ENCODE measurements at regions of chr4 and their contacts with region 1.

Region 1: DNA sequence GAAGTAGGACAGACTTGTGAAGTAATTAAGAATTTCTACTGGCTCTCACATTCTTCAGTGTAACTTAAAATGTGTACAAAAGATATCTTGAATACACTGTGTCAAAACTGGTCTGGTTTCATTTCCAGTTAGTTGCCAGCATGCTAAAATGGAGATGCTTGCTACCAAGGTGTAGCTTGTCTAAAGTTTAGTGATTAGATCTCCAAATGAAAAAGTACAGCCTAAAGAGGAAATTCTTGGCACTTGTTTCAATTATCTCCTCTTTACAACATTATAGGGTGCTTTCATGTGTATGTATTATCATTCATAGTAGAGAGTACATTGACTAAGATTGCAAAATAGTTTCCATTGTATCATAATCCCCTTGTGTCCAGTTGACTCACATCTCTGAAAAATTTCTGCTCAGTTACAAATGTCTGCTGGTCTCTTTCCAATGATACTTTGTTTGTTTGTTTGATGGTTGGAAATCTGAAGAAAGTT is 97.3 kb upstream of the SPRY1 start:
- DNase-seq: peak; percentile 13
- H3K4me3 ChIP-seq: no peak overlapping the region
- H3K27ac ChIP-seq: no peak overlapping the region
- H3K4me1 ChIP-seq: no peaks in the 10 kb centered on the region
- H3K27me3 ChIP-seq: no peaks in the 10 kb centered on the region
- CTCF ChIP-seq: no peak
- POLR2A ChIP-seq: no peak

Region 2: GRCh38 chr4:123288309-123289025 is 10.8 kb before region 1 on chr4:
- CTCF ChIA-PET with region 1: interaction called, 5 read pairs
- POLR2A ChIA-PET with region 1: no interaction called
- dilution Hi-C with region 1: no loop called
- intact Hi-C with region 1: loop called (anchors 1 kb)
- DNase-seq: no peak
- H3K4me3 ChIP-seq: no peak overlapping the region
- H3K27ac ChIP-seq: no peak overlapping the region
- H3K4me1 ChIP-seq: peaks cover 4% of the 10 kb centered on the region
- H3K27me3 ChIP-seq: no peaks in the 10 kb centered on the region
- CTCF ChIP-seq: no peak
- POLR2A ChIP-seq: no peak